ENCODE measurements at regions of chr15 and their contacts with region 1.

Region 1: GRCh38 chr15:51132384-51133139 is 37.9 kb upstream of the TNFAIP8L3 start:
- DNase-seq: peak; percentile 56
- ATAC-seq: peak; percentile 92
- H3K4me3 Mint-ChIP-seq: no peak overlapping the region
- H3K27ac Mint-ChIP-seq: peak overlapping the region; percentile 16; the same call in 1 of the 2 replicates
- H3K4me1 Mint-ChIP-seq: peaks cover 9% of the 10 kb centered on the region
- H3K27me3 Mint-ChIP-seq: no peaks in the 10 kb centered on the region
- CTCF ChIP-seq: peak; percentile 89

Region 2: GRCh38 chr15:51111061-51111460 is 21.5 kb before region 1 on chr15:
- CTCF ChIA-PET with region 1: interaction called, 13 read pairs
- POLR2A ChIA-PET with region 1: no interaction called
- DNase-seq: no peak
- ATAC-seq: no peak
- H3K4me3 Mint-ChIP-seq: no peak overlapping the region
- H3K27ac Mint-ChIP-seq: no peak overlapping the region
- H3K4me1 Mint-ChIP-seq: peaks cover 15% of the 10 kb centered on the region
- H3K27me3 Mint-ChIP-seq: no peaks in the 10 kb centered on the region; the same call in 1 of the 2 replicates
- CTCF ChIP-seq: no peak

Region 3: DNA sequence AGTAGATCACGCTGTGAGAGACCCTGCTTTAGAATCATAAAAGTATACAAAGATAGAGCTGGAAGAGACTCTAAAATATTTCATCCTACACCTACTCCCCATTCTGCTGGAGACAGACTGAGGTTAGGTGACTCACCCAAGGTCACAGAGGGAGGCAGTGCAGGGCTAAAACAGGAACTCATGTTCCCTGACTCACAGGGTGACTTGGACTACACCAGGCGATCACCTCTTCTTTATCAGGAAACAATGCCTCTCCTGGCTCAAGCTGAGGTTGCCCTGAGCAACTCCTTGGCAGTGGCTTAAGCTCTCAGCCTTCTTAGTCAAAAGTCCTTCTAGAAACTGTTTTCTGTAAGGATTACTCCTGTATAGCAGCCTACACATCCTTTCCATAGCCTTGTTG is 11.4 kb before region 1 on chr15:
- CTCF ChIA-PET with region 1: interaction called, 18 read pairs
- POLR2A ChIA-PET with region 1: no interaction called
- DNase-seq: no peak
- ATAC-seq: peak; percentile 52
- H3K4me3 Mint-ChIP-seq: no peak overlapping the region
- H3K27ac Mint-ChIP-seq: no peak overlapping the region
- H3K4me1 Mint-ChIP-seq: peaks cover 3% of the 10 kb centered on the region
- H3K27me3 Mint-ChIP-seq: no peaks in the 10 kb centered on the region
- CTCF ChIP-seq: no peak

Region 4: GRCh38 chr15:51192521-51193280 is 60.1 kb after region 1 on chr15:
- CTCF ChIA-PET with region 1: interaction called, 35 read pairs
- POLR2A ChIA-PET with region 1: no interaction called
- DNase-seq: peak; percentile 98
- ATAC-seq: peak; percentile 97
- H3K4me3 Mint-ChIP-seq: no peak overlapping the region
- H3K27ac Mint-ChIP-seq: no peak overlapping the region
- H3K4me1 Mint-ChIP-seq: peaks cover 20% of the 10 kb centered on the region
- H3K27me3 Mint-ChIP-seq: no peaks in the 10 kb centered on the region; the same call in 1 of the 2 replicates
- CTCF ChIP-seq: peak; percentile 96

Region 5: GRCh38 chr15:51198701-51199232 is 66.2 kb after region 1 on chr15:
- CTCF ChIA-PET with region 1: interaction called, 16 read pairs
- POLR2A ChIA-PET with region 1: no interaction called
- DNase-seq: no peak
- ATAC-seq: peak; percentile 65
- H3K4me3 Mint-ChIP-seq: no peak overlapping the region
- H3K27ac Mint-ChIP-seq: no peak overlapping the region
- H3K4me1 Mint-ChIP-seq: no peaks in the 10 kb centered on the region
- H3K27me3 Mint-ChIP-seq: no peaks in the 10 kb centered on the region
- CTCF ChIP-seq: no peak

Measured in WTC11 (cell line).